Common myeloid progenitor, CD34-positive (primary cell): ENCODE measurements at regions of chr6 and their contacts with region 1.

Region 1: DNA sequence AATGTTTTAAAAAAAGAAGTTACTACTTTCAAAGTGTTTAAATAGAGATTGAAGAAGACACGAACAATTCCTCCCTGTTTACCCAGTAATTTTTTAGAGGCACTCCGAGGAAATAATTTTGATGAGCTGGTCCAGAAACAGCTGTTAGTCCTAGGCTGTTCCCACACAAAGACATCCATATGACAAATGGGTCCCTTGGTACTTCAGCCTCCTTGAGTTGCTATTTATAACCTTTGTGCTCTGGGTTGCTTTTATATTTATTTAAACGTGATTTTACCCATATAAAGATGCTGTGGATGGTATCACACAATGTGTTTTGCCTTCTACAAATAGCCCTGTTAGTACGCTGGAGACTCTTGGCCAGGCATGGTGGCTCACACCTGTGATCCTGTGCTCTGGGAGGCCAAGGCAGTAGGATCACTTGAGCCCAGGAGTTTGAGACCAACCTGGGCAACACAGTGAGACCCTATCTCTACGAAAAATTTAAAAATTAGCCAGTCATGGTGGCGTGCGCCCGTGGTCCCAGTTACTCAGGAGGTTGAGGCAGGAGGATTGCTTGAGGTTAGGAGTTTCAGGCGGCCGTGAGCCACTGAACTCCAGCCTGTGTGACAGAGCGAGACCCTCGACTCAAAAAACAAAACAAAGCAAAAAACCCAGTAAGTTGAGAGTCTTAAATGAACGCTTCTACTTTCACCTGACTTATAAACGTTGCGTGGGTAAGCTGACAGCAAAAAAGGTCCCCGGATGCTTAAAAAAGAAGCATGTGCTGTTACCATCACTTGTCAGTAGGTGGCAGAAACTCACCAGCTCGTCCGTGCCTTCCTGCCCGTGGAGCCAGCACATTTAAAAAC is 56.9 kb upstream of the ARMH2 start:
- DNase-seq: peak; percentile 79 to 90 (median 85)
- H3K4me3 ChIP-seq: no peak overlapping the region
- H3K27ac ChIP-seq: no peak overlapping the region
- H3K4me1 ChIP-seq: peaks cover 15 to 36% (median 26%) of the 10 kb centered on the region in 4 experiments
- H3K27me3 ChIP-seq: no peaks in the 10 kb centered on the region

Region 2: DNA sequence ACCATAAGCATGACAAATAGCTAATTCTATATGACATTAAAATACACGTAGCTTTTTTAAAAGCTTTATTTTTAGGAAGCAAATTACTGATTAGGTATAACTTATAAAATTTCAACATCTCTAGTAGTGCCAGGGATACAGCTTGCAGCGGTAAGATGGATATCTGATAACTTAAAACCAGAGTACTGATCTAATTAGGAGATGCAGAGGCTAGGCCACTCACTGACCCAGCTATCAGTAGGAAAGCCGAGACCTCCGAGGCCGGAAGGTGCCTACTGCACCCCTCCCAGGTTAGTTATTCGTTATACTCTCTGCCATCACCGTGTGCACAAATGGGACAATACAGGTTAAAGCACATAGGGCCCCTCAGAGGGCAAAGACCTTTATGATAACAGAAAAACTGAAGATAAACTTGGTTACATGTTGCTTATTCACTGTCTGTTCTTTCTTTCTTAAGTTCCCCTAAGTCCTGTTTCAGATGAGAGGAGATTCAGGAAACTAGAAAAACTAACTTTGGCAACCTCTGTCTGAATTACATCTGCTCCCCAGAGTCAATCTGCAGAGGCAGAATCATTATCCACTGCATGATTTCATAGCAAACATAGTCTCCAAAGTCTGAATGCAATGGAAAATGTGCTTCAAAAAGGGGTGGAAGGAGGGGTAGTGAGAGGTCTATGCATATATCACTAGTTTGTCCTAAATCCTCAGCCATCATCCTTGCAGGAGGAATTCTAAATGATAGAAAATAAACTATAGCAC is 19.3 kb after region 1 on chr6:
- CTCF ChIA-PET with region 1: interaction called, 10 read pairs
- POLR2A ChIA-PET with region 1: interaction called, 3 read pairs
- DNase-seq: no peak
- H3K4me3 ChIP-seq: no peak overlapping the region
- H3K27ac ChIP-seq: no peak overlapping the region
- H3K4me1 ChIP-seq: no peaks in the 10 kb centered on the region
- H3K27me3 ChIP-seq: no peaks in the 10 kb centered on the region

Region 3: GRCh38 chr6:24933868-24934401 is 78.3 kb after region 1 on chr6:
- CTCF ChIA-PET with region 1: interaction called, 13 read pairs
- POLR2A ChIA-PET with region 1: no interaction called
- DNase-seq: peak in 1 of 3 donors; percentile 35
- H3K4me3 ChIP-seq: peak overlapping the region in 2 of 7 experiments; percentile 19 to 72
- H3K27ac ChIP-seq: no peak overlapping the region
- H3K4me1 ChIP-seq: peaks cover 20 to 64% (median 33%) of the 10 kb centered on the region in 4 experiments
- H3K27me3 ChIP-seq: no peaks in the 10 kb centered on the region

Region 4: GRCh38 chr6:25017932-25018567 is 162.4 kb after region 1 on chr6:
- CTCF ChIA-PET with region 1: interaction called, 51 read pairs
- POLR2A ChIA-PET with region 1: no interaction called
- DNase-seq: peak; percentile 80 to 92 (median 88)
- H3K4me3 ChIP-seq: no peak overlapping the region
- H3K27ac ChIP-seq: peak overlapping the region in 1 of 2 experiments; percentile 50
- H3K4me1 ChIP-seq: peaks cover 18 to 47% (median 22%) of the 10 kb centered on the region in 4 experiments
- H3K27me3 ChIP-seq: no peaks in the 10 kb centered on the region

Region 5: GRCh38 chr6:25027221-25027916 is 171.7 kb after region 1 on chr6:
- CTCF ChIA-PET with region 1: interaction called, 11 read pairs
- POLR2A ChIA-PET with region 1: no interaction called
- DNase-seq: peak in 2 of 3 donors; percentile 44 to 53
- H3K4me3 ChIP-seq: peak overlapping the region in 3 of 7 experiments; percentile 4 to 48 (median 46)
- H3K27ac ChIP-seq: peak overlapping the region; percentile 46 to 50
- H3K4me1 ChIP-seq: peaks cover 19 to 59% (median 48%) of the 10 kb centered on the region in 4 experiments
- H3K27me3 ChIP-seq: no peaks in the 10 kb centered on the region

Region 6: DNA sequence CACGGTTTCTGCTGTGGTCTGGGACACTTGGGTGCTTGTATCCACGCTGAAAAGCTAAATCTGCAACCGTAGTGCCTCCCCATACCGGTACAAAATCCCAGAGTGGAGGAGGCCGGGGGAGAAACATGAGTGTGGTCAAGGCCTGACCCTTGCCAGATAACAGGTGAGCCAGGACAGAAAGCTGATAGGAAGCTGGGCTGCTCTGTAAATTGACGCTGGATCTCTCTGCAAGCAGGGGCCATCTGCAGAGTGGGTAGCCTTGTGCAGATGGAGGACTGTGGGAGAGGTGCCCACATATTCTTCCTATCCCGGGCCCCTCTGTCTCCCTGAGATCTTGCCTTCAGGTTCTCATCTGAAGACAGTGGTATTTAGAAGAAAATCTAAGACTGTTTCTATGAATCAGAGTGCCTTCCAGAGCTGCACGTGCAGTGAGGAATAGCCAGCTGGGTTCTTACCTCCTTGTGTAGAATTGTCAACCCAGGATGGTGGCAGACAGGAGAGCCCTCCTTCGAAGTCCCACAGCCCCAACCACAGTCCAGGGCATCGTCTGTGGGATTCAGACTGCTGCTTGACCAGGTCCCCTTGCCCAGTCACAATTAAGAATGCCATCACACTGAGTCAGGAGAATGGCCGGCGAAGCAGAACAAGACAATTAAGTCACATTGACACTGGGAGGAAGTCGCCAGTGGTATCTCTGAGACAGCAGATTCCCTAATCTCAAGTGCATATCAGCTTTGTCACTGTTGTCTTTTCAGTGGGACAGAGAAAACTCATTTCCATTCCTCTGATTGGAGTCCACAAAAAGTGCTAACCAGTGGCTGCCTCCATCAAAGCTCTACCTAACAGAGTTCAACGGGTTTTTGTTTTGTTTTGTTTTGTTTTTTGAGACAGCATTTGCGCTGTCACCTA is 180.2 kb after region 1 on chr6:
- CTCF ChIA-PET with region 1: interaction called, 10 read pairs
- POLR2A ChIA-PET with region 1: interaction called, 3 read pairs
- DNase-seq: peak; percentile 68 to 91 (median 84)
- H3K4me3 ChIP-seq: peak overlapping the region in 6 of 7 experiments; percentile 26 to 80 (median 62)
- H3K27ac ChIP-seq: peak overlapping the region; percentile 73 to 85
- H3K4me1 ChIP-seq: peaks cover 41 to 80% (median 60%) of the 10 kb centered on the region in 4 experiments
- H3K27me3 ChIP-seq: no peaks in the 10 kb centered on the region

Region 7: GRCh38 chr6:25070547-25071366 is 215.1 kb after region 1 on chr6:
- CTCF ChIA-PET with region 1: interaction called, 39 read pairs
- POLR2A ChIA-PET with region 1: interaction called, 4 read pairs
- DNase-seq: peak; percentile 88 to 94 (median 93)
- H3K4me3 ChIP-seq: peak overlapping the region in 1 of 7 experiments; percentile 42
- H3K27ac ChIP-seq: peak overlapping the region in 1 of 2 experiments; percentile 26
- H3K4me1 ChIP-seq: peaks cover 0 to 7% (median 1%) of the 10 kb centered on the region in 4 experiments
- H3K27me3 ChIP-seq: no peaks in the 10 kb centered on the region